Activated T-helper 1 cell treated with anti-CD3 and anti-CD28 coated beads, Interleukin-12 subunit alpha, Interleukin-12 subunit beta, Interleukin-2, Interleukin-4 antibody, amounts not matched to agents 30 ng/mL and 10 ng/mL and 1 ng/mL, durations not matched to agents 14 hours and 24 hours and 36 hours (primary cell): ENCODE measurements at regions of chrX and their contacts with region 1.

Region 1: DNA sequence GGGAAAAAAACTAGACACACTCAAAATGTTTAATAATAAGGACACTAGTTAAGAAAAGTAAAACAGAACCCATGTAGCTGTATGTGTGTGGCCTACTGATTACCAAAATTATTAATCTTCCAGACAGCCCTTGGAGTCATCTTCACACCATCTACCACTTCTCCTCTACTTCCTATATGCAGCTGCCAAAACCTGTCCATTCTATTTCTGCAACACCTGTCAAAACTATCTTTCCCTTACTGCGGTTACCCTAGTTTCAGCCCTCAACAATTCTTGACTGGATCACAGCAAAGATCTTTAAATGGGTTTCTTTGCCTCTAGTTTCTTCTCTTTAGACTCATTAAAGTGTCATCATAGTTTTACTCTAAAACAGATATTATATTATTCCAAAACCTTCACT is 72.6 kb downstream of the GPR82 start:
- DNase-seq: no peak
- H3K4me3 Mint-ChIP-seq: no peak overlapping the region
- H3K27ac Mint-ChIP-seq: peak overlapping the region; percentile 8
- H3K4me1 Mint-ChIP-seq: peaks cover 30% of the 10 kb centered on the region
- H3K27me3 Mint-ChIP-seq: no peaks in the 10 kb centered on the region

Region 2: GRCh38 chrX:41655631-41656030 is 140.9 kb before region 1 on chrX:
- intact Hi-C with region 1: no loop called
- DNase-seq: no peak
- H3K4me3 Mint-ChIP-seq: no peak overlapping the region
- H3K27ac Mint-ChIP-seq: no peak overlapping the region
- H3K4me1 Mint-ChIP-seq: peaks cover 9% of the 10 kb centered on the region
- H3K27me3 Mint-ChIP-seq: no peaks in the 10 kb centered on the region

Region 3: DNA sequence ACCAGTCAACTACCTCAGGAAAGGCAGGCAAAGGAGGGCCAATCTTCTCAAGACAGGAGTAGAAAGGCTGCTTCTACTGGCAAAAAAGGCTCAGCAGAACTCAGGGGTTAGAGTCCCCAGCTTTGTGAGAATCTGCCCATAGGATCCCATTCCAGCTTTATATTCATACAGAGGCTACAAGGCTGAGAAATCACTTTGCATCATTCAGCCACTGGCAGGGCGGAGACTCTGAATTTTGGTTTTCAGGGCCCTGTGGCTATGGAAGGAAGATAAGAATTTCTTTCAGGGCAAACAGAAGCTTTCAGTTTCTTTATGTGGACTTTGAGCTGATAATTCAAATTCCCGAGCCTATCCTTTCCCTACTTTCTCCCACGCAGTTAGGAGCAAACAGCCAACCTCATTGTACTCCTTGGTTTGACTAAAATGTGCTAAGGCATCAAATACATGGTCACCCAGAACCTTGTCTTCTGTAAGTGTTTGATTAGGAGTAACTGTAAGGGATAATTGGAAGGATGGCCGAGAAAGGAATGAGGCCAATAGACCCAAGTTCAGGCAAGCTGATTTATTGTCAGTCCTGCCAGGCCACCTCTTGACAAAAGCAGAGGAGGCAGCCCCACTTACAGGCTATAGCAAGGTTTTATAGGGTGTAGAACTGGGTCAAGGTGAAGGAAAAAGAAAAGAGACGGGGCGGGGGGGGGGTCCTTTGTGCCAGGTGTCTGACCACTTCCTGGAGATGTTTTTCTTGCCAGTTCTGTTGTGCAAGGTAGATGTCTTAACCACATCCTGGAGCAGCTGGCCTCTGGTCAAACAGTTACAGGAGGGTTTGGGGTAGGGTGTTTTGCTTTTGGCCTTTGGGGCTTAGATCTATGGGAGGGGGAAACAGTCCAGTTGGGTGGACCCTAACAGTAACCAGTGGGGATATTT is 1146.7 kb after region 1 on chrX:
- intact Hi-C with region 1: loop called (anchors 10 kb)
- DNase-seq: peak; percentile 12
- H3K4me3 Mint-ChIP-seq: peak overlapping the region; percentile 27
- H3K27ac Mint-ChIP-seq: peak overlapping the region; percentile 85
- H3K4me1 Mint-ChIP-seq: peaks cover 79% of the 10 kb centered on the region
- H3K27me3 Mint-ChIP-seq: no peaks in the 10 kb centered on the region

Region 4: DNA sequence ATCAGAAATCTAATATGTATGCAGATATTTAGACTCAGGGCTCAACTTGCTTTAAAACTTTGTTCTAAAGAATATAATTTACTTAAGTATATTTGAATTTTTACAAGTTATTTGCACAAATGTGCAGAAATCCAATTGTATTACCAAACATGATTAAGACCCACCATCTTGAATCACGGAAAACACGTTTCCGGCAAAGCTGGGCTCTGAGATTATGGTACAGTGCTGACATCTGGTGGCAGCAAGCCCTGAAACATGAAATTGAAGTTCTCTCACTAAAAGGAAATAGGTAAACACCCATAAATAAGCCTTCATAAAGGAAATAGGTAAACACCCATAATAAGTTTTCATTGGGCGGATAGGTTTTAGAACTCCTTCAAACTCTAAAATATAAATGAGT is 1761.2 kb after region 1 on chrX:
- intact Hi-C with region 1: loop called (anchors 5 kb)
- DNase-seq: peak; percentile 20
- H3K4me3 Mint-ChIP-seq: no peak overlapping the region
- H3K27ac Mint-ChIP-seq: no peak overlapping the region
- H3K4me1 Mint-ChIP-seq: no peaks in the 10 kb centered on the region
- H3K27me3 Mint-ChIP-seq: peaks cover 4% of the 10 kb centered on the region